H1 (cell line): ENCODE measurements at regions of chr1 and their contacts with region 1.

Region 1: DNA sequence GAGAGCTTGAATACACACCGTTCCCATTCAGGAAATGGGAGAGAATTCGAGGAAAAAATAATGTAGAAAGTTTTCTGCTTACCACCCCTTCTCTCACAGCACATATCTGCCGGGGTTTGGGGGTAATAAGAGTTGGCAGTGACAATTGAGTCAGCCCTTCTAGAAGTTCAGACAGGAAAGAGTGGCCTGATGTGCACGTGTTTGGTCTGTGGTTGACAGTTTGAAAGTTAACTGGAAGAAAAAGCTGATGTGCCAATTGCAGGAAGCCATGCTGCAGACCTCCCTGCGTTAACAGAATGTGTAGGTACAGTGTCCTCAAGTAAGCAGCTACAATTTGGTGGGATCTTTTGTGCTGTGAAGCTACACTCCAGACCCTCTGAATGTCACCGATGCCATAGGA is 50.9 kb downstream of the DHX9 start:
- DNase-seq: no peak
- H3K4me3 ChIP-seq: no peak overlapping the region
- H3K27ac ChIP-seq: no peak overlapping the region
- H3K4me1 ChIP-seq: no peaks in the 10 kb centered on the region
- H3K27me3 ChIP-seq: no peaks in the 10 kb centered on the region
- CTCF ChIP-seq: no peak
- EP300 ChIP-seq: no peak
- POLR2A ChIP-seq: no peak
- RAD21 ChIP-seq: no peak

Region 2: GRCh38 chr1:182811975-182812725 is 77.8 kb before region 1 on chr1:
- CTCF ChIA-PET with region 1: no interaction called
- POLR2A ChIA-PET with region 1: no interaction called
- DNase-seq: no peak
- H3K4me3 ChIP-seq: no peak overlapping the region
- H3K27ac ChIP-seq: no peak overlapping the region
- H3K4me1 ChIP-seq: 0 out of 7 replicates have a peak, but pooled peaks cover 0 to 4% (median 0%) of the 10 kb centered on the region in 4 experiments
- H3K27me3 ChIP-seq: no peaks in the 10 kb centered on the region
- CTCF ChIP-seq: peak in 2 of 3 experiments; percentile 35 to 46; a peak in 2 of 4 replicates
- EP300 ChIP-seq: no peak
- POLR2A ChIP-seq: no peak
- RAD21 ChIP-seq: peak; percentile 1 to 31; a peak in 1 of 4 replicates

Region 3: DNA sequence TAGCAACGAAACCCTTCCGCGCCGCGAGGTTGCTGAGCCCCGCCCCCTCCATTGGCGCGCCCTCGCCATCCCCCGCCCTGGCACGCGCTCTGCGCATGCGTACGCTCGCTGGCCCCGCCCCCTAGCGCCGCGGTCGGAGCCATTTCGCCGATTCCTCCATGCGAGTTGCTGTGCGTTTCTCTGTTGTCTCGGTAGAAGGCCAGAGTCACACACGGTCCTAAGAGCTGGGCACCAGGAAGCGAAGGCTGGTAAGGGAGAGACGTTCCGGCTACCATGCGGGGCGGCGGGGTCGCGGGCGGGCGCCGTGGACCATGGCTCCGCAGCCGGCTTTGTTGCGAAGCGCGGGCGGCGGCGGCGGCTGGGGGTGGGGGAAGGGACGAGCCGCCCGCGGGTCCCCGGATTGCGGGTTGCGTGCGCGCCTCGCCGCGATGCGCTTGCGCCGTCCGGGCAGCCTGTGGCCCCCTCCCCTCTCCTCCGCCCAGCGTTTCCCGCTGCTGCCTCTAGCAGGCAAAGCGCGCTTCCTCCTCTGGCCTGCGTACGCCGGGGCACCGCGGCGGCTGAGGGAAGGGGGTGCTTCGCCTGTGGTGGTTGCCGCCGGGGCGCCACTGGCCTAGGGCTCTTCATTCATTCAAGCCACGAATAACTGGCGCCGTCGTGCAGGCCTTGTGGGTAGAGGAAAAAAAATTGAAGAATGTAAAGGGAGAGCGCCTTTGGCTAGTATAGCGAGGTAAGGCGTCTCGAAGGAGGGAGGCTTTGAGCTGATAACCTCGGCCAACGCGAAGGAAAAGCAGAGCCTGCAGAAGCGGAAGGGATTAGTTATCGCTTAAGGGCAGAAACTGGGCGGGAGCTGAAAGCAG is 50.6 kb before region 1 on chr1 and contains the start of gene DHX9:
- CTCF ChIA-PET with region 1: interaction called, 3 read pairs
- POLR2A ChIA-PET with region 1: interaction called, 34 read pairs
- DNase-seq: peak; percentile 69 to 99
- H3K4me3 ChIP-seq: peak within 1 kb of the TSS; percentile 88 to 99 (median 94)
- H3K27ac ChIP-seq: peak within 1 kb of the TSS; percentile 98
- H3K4me1 ChIP-seq: peaks cover 0 to 6% (median 3%) of the 10 kb centered on the region in 4 experiments; a peak in 4 of 7 replicates
- H3K27me3 ChIP-seq: no peaks in the 10 kb centered on the region
- CTCF ChIP-seq: peak; percentile 15 to 32 (median 29); a peak in 3 of 4 replicates
- EP300 ChIP-seq: no peak
- POLR2A ChIP-seq: peak; percentile 98
- RAD21 ChIP-seq: no peak
- total RNA-seq, gene DHX9: 329 and 333 TPM in 2 replicates

Region 4: DNA sequence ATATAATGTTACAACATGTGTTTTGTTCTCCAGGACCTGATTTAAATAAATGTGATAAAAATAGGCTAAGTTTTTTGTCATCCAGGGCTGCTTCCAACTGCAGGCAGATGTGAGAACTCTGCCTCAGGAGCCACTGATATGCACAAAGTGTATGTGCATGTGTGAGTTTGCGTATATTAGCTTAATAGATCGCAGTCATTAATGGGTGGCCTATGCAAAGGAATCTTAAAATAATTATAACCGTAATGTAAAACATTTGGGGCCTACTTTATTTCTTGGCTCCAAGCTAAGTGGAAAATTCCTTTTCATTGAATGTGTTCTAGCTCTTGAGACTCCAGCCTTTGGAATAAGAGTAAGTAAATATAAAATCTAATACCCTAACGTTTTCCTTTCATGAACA is 34.1 kb before region 1 on chr1:
- CTCF ChIA-PET with region 1: interaction called, 7 read pairs
- POLR2A ChIA-PET with region 1: interaction called, 13 read pairs
- DNase-seq: no peak
- H3K4me3 ChIP-seq: no peak overlapping the region
- H3K27ac ChIP-seq: no peak overlapping the region
- H3K4me1 ChIP-seq: no peaks in the 10 kb centered on the region
- H3K27me3 ChIP-seq: no peaks in the 10 kb centered on the region
- CTCF ChIP-seq: no peak
- EP300 ChIP-seq: no peak
- POLR2A ChIP-seq: no peak
- RAD21 ChIP-seq: no peak

Region 5: DNA sequence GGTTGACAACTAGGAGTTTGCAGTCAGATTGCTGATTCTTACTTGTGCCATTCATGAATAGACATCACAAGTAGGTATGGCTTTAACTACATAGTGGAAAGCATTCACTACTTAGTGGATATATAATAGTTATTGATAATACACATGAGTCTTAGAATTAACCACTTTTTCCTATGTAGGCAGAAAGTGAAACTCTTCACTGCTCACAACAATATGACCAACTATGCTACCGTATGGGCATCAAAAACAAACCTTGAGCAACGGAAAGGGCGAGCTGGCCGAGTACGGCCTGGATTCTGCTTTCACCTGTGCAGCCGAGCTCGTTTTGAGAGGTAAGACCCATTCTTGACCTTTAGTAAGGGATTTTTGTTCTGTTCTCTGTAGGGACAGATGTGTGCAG is 12.2 kb before region 1 on chr1:
- CTCF ChIA-PET with region 1: interaction called, 3 read pairs
- POLR2A ChIA-PET with region 1: interaction called, 29 read pairs
- DNase-seq: no peak
- H3K4me3 ChIP-seq: no peak overlapping the region
- H3K27ac ChIP-seq: no peak overlapping the region
- H3K4me1 ChIP-seq: no peaks in the 10 kb centered on the region
- H3K27me3 ChIP-seq: no peaks in the 10 kb centered on the region
- CTCF ChIP-seq: no peak
- EP300 ChIP-seq: no peak
- POLR2A ChIP-seq: no peak
- RAD21 ChIP-seq: no peak

Region 6: DNA sequence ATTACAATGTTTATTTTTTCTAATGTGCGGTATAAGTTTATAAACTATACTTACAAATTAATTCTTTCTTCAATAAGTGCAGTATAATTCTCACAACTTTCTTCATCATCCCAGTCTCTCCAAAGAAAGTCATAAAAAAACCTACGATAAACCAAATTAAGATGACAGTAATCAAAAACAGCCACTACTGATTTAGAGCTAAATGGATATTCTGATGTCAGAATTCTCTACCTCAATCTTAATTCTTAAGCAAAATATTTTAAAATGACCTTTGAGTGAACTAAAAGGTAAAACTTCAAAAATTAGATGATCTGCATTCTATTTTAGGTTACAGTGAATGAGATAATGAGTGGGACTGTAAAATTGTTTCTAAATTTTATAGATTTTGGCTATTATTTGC is 49.4 kb after region 1 on chr1:
- CTCF ChIA-PET with region 1: no interaction called
- POLR2A ChIA-PET with region 1: interaction called, 17 read pairs
- DNase-seq: no peak
- H3K4me3 ChIP-seq: no peak overlapping the region
- H3K27ac ChIP-seq: no peak overlapping the region
- H3K4me1 ChIP-seq: no peaks in the 10 kb centered on the region
- H3K27me3 ChIP-seq: no peaks in the 10 kb centered on the region
- CTCF ChIP-seq: no peak
- EP300 ChIP-seq: no peak
- POLR2A ChIP-seq: no peak
- RAD21 ChIP-seq: no peak